Breast epithelium (tissue), 4 donors: ENCODE measurements at regions of chr20 and their contacts with region 1.

Region 1: GRCh38 chr20:54093423-54094267 is 23.3 kb upstream of the BCAS1 start:
- DNase-seq: no peak
- H3K4me3 ChIP-seq: no peak overlapping the region
- H3K27ac ChIP-seq: peak overlapping the region in 1 of 2 donors; percentile 1
- H3K4me1 ChIP-seq: no peaks in the 10 kb centered on the region
- H3K27me3 ChIP-seq: no peaks in the 10 kb centered on the region
- CTCF ChIP-seq: no peak
- POLR2A ChIP-seq: no peak

Region 2: GRCh38 chr20:54207743-54208547 is 114.3 kb after region 1 on chr20 and contains the start of gene PFDN4:
- intact Hi-C with region 1: loop called (anchors 10 kb)
- DNase-seq: peak; percentile 70 to 78
- H3K4me3 ChIP-seq: peak within 1 kb of the TSS; percentile 85 to 90 (median 89)
- H3K27ac ChIP-seq: peak within 1 kb of the TSS; percentile 97 to 99
- H3K4me1 ChIP-seq: peaks cover 0 to 4% of the 10 kb centered on the region in 2 donors
- H3K27me3 ChIP-seq: no peaks in the 10 kb centered on the region
- CTCF ChIP-seq: peak; percentile 65 to 67 (median 67)
- POLR2A ChIP-seq: no peak
- total RNA-seq, gene PFDN4: 41.0 to 57.7 (median 52.1) TPM